SK-N-SH (cell line): ENCODE measurements at regions of chr1 and their contacts with region 1.

Region 1: GRCh38 chr1:221435504-221435904 is 306.4 kb downstream of the DUSP10 start:
- DNase-seq: peak; percentile 58
- H3K4me3 ChIP-seq: no peak overlapping the region; a peak in 1 of 4 replicates
- H3K27ac ChIP-seq: peak overlapping the region in 1 of 2 experiments; percentile 16; a peak in 1 of 4 replicates
- H3K4me1 ChIP-seq: peaks cover 12 to 14% of the 10 kb centered on the region in 2 experiments; a peak in 3 of 4 replicates
- H3K27me3 ChIP-seq: no peaks in the 10 kb centered on the region
- CTCF ChIP-seq: peak; percentile 96
- EP300 ChIP-seq: no peak
- RAD21 ChIP-seq: peak; percentile 93

Region 2: GRCh38 chr1:220873868-220874655 is 561.4 kb before region 1 on chr1:
- CTCF ChIA-PET with region 1: interaction called, 32 read pairs
- POLR2A ChIA-PET with region 1: no interaction called
- DNase-seq: peak; percentile 75
- H3K4me3 ChIP-seq: no peak overlapping the region; a peak in 1 of 4 replicates
- H3K27ac ChIP-seq: peak overlapping the region in 1 of 2 experiments; percentile 35; a peak in 2 of 4 replicates
- H3K4me1 ChIP-seq: peaks cover 0 to 11% of the 10 kb centered on the region in 2 experiments; a peak in 1 of 4 replicates
- H3K27me3 ChIP-seq: no peaks in the 10 kb centered on the region
- CTCF ChIP-seq: peak; percentile 88
- EP300 ChIP-seq: no peak
- RAD21 ChIP-seq: peak; percentile 92

Region 3: GRCh38 chr1:221263831-221264767 is 171.4 kb before region 1 on chr1:
- CTCF ChIA-PET with region 1: interaction called, 90 read pairs
- POLR2A ChIA-PET with region 1: no interaction called
- DNase-seq: peak; percentile 50
- H3K4me3 ChIP-seq: no peak overlapping the region
- H3K27ac ChIP-seq: peak overlapping the region; percentile 53 to 85; a peak in 3 of 4 replicates
- H3K4me1 ChIP-seq: peaks cover 0 to 4% of the 10 kb centered on the region in 2 experiments; a peak in 2 of 4 replicates
- H3K27me3 ChIP-seq: no peaks in the 10 kb centered on the region
- CTCF ChIP-seq: peak; percentile 83
- EP300 ChIP-seq: peak in 1 of 2 experiments; percentile 51; a peak in 2 of 4 replicates
- RAD21 ChIP-seq: peak; percentile 87

Region 4: DNA sequence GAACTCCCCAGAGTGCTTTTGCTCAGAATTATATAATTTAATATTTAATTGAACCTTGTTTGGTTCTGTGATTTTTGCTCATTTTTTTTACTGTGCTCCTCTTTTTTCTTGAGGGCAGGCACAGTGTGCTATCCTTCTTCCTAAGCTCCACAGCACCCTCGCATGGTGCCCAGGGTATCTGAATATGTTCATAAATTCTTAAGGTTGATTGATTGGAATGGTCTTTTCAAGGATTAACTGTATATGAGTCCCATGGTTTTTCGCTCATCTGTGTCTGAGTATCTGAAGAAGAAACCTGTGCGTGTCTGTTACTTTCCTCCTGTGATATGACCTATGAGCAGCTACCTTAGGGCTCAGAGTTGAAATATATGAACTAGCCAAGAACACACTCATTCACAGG is 162.6 kb before region 1 on chr1:
- CTCF ChIA-PET with region 1: interaction called, 15 read pairs
- POLR2A ChIA-PET with region 1: no interaction called
- DNase-seq: no peak
- H3K4me3 ChIP-seq: no peak overlapping the region
- H3K27ac ChIP-seq: no peak overlapping the region
- H3K4me1 ChIP-seq: peaks cover 0 to 2% of the 10 kb centered on the region in 2 experiments; a peak in 1 of 4 replicates
- H3K27me3 ChIP-seq: no peaks in the 10 kb centered on the region
- CTCF ChIP-seq: 0 out of 2 replicates have a peak, but pooled peaks have one; percentile 20
- EP300 ChIP-seq: no peak
- RAD21 ChIP-seq: no peak

Region 5: GRCh38 chr1:221448585-221449175 is 13.2 kb after region 1 on chr1:
- CTCF ChIA-PET with region 1: interaction called, 12 read pairs
- POLR2A ChIA-PET with region 1: no interaction called
- DNase-seq: no peak
- H3K4me3 ChIP-seq: no peak overlapping the region
- H3K27ac ChIP-seq: no peak overlapping the region
- H3K4me1 ChIP-seq: no peaks in the 10 kb centered on the region
- H3K27me3 ChIP-seq: no peaks in the 10 kb centered on the region
- CTCF ChIP-seq: no peak
- EP300 ChIP-seq: no peak
- RAD21 ChIP-seq: no peak

Region 6: GRCh38 chr1:221543529-221544120 is 108.1 kb after region 1 on chr1:
- CTCF ChIA-PET with region 1: no interaction called
- POLR2A ChIA-PET with region 1: no interaction called
- DNase-seq: peak; percentile 21
- H3K4me3 ChIP-seq: no peak overlapping the region
- H3K27ac ChIP-seq: no peak overlapping the region
- H3K4me1 ChIP-seq: no peaks in the 10 kb centered on the region
- H3K27me3 ChIP-seq: no peaks in the 10 kb centered on the region
- CTCF ChIP-seq: peak; percentile 69
- EP300 ChIP-seq: no peak
- RAD21 ChIP-seq: peak; percentile 73